ENCODE measurements at regions of chr18 and their contacts with region 1.

Region 1: GRCh38 chr18:9173770-9174233 is 37.2 kb downstream of the ANKRD12 start:
- DNase-seq: peak; percentile 55
- H3K4me3 Mint-ChIP-seq: no peak overlapping the region
- H3K27ac Mint-ChIP-seq: peak overlapping the region; percentile 23
- H3K4me1 Mint-ChIP-seq: peaks cover 86% of the 10 kb centered on the region
- H3K27me3 Mint-ChIP-seq: no peaks in the 10 kb centered on the region

Region 2: DNA sequence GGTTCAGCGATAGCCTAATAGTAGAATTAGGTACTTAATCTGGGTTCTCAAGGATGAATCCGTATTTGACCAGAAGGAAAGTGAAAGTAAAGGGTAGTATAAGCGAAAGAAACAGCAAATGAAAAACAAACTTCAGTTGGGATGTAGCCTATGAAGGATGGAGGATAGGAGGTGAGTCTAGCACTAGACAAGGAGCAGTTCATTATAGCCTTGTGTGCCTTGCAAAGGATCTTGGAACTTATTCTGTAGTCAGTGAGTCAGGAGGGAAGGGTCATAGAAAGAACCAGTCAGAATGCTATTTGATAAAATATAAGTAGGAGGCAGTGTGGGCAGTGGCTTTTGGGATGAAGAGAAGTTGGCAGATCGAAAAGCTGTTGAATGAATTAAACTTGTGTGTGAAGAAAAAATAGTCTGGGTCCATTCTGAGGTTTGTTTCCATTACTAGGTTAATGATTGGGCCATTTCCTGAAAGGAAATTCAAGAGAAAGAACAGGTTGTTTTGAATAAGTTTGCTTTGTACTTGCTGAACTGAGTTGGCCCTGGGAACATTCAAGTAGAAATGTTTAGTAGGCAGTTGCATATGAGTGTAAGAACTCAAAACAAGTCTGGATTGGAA is 11.3 kb after region 1 on chr18:
- CTCF ChIA-PET with region 1: no interaction called
- POLR2A ChIA-PET with region 1: interaction called, 3 read pairs
- intact Hi-C with region 1: loop called (anchors 1 kb)
- DNase-seq: peak; percentile 44
- H3K4me3 Mint-ChIP-seq: peak overlapping the region; percentile 65
- H3K27ac Mint-ChIP-seq: peak overlapping the region; percentile 73
- H3K4me1 Mint-ChIP-seq: peaks cover 65% of the 10 kb centered on the region
- H3K27me3 Mint-ChIP-seq: no peaks in the 10 kb centered on the region

Region 3: DNA sequence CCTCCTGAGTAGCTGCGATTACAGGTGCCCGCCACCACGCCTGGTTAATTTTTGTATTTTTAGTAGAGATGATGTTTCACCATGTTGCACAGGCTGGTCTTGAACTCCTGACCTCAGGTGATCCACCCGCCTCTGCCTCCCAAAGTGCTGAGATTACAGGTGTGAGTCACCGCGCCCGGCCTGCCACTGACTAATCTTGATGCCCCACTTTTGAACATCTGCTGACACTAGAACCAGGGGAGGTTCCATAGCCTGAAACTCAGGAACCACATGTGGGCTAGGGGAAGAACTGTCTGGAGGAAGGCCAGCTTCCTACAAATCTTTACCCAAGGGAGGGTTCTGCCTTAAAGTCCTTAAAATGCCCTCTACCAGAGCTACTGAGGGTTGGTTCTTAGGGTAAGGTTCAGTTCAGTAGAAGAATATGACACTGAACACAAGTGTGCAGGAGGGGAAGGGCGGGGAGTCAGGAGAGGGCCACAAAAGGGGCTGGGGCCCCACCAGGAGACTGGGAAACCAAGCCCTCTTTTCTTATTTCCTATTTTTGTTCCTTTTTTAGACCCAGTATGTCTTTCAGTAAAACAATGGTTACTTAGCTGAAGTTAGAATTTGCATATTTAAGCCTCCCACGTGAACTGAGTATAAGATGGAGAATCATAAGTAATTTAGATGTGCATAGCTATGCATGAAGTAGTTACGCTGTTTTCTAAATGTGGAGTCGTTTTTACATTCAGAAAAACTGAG is 528.0 kb after region 1 on chr18:
- CTCF ChIA-PET with region 1: no interaction called
- POLR2A ChIA-PET with region 1: no interaction called
- intact Hi-C with region 1: no loop called
- DNase-seq: peak; percentile 66
- H3K4me3 Mint-ChIP-seq: no peak overlapping the region
- H3K27ac Mint-ChIP-seq: no peak overlapping the region
- H3K4me1 Mint-ChIP-seq: peaks cover 17% of the 10 kb centered on the region
- H3K27me3 Mint-ChIP-seq: peaks cover 40% of the 10 kb centered on the region